ENCODE measurements at regions of chr11 and their contacts with region 1.

Region 1: DNA sequence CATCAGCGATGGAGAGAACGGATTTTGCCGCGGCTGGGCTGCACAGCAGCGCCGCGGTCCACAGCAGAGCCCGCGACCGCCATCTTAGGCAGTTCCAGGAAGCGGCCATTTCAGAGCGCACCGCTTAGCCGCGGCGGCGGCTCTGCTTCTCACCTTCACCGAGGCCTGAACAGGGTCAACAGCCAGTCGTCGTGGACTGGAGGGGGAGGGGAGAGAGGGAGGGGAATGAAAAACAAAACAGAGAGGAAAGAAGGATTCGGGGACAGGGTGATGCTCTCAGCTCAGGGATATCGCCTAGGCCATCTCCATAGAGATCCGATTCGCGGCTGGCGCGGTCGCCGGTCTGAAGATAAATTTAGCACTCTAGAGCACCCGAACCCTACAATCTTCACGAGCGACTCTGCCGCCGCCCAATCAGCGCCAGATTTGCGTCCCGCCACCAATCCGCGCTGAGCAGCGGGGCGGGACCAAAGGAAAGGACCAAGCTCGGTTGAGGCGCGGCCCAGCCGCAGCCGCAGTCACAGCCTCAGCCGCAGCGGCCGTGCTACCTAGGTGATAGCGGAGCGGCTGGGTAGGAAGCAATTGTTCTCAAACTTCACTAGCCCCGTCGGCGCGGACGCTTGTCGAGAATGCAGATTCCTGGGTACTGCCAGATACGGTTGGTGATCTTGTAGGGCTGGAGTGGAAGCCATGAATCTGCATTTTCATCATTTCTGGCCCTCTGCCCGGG is at the start of gene ZBED5:
- DNase-seq: peak; percentile 93
- ATAC-seq: peak; percentile 89
- H3K4me3 Mint-ChIP-seq: peak within 1 kb of the TSS; percentile 100
- H3K27ac Mint-ChIP-seq: peak within 1 kb of the TSS; percentile 100
- H3K4me1 Mint-ChIP-seq: peaks cover 48% of the 10 kb centered on the region
- H3K27me3 Mint-ChIP-seq: no peaks in the 10 kb centered on the region
- CTCF ChIP-seq: no peak
- total RNA-seq, gene ZBED5: 111 and 116 TPM in 2 replicates

Region 2: GRCh38 chr11:10293423-10294289 is 564.2 kb before region 1 on chr11 and contains the start of gene SBF2:
- CTCF ChIA-PET with region 1: no interaction called
- POLR2A ChIA-PET with region 1: no interaction called
- intact Hi-C with region 1: loop called (anchors 10 kb)
- DNase-seq: peak; percentile 78
- ATAC-seq: peak; percentile 66
- H3K4me3 Mint-ChIP-seq: peak within 1 kb of the TSS; percentile 81
- H3K27ac Mint-ChIP-seq: no peak within 1 kb of the TSS
- H3K4me1 Mint-ChIP-seq: peaks cover 27% of the 10 kb centered on the region
- H3K27me3 Mint-ChIP-seq: peaks cover 29% of the 10 kb centered on the region
- CTCF ChIP-seq: no peak
- total RNA-seq, gene SBF2: 7.9 and 12.0 TPM in 2 replicates

Region 3: GRCh38 chr11:10824888-10825287 is 33.0 kb before region 1 on chr11:
- CTCF ChIA-PET with region 1: no interaction called
- POLR2A ChIA-PET with region 1: interaction called, 45 read pairs
- intact Hi-C with region 1: loop called (anchors 1 kb)
- DNase-seq: no peak
- ATAC-seq: peak; percentile 99
- H3K4me3 Mint-ChIP-seq: peak overlapping the region; percentile 63
- H3K27ac Mint-ChIP-seq: peak overlapping the region; percentile 90
- H3K4me1 Mint-ChIP-seq: peaks cover 32% of the 10 kb centered on the region
- H3K27me3 Mint-ChIP-seq: no peaks in the 10 kb centered on the region
- CTCF ChIP-seq: no peak

Region 4: DNA sequence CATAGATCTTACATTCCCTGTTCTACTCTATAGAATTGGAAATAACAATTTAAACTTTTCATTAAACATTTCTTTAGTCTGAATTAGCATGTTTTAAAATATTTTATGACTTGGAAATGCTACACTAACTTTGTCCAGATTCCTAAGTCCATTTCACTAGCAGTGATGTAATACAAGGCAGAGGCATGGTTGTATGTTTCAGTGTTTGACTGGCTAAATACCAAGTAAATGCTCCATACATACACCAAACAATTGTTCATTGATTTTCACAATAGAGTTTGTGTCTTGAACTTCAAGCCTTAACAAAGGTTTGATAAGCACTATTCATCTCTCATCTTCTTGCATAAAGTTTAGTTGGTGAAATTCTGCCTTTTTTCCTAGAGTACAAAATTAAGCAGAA is 13.5 kb before region 1 on chr11:
- CTCF ChIA-PET with region 1: no interaction called
- POLR2A ChIA-PET with region 1: interaction called, 37 read pairs
- intact Hi-C with region 1: loop called (anchors 2 kb)
- DNase-seq: no peak
- ATAC-seq: no peak
- H3K4me3 Mint-ChIP-seq: no peak overlapping the region
- H3K27ac Mint-ChIP-seq: no peak overlapping the region
- H3K4me1 Mint-ChIP-seq: peaks cover 13% of the 10 kb centered on the region
- H3K27me3 Mint-ChIP-seq: no peaks in the 10 kb centered on the region
- CTCF ChIP-seq: no peak

Region 5: GRCh38 chr11:10899121-10899830 is 41.4 kb after region 1 on chr11:
- CTCF ChIA-PET with region 1: no interaction called
- POLR2A ChIA-PET with region 1: interaction called, 9 read pairs
- intact Hi-C with region 1: loop called (anchors 1 kb)
- DNase-seq: no peak
- ATAC-seq: peak; percentile 38
- H3K4me3 Mint-ChIP-seq: no peak overlapping the region
- H3K27ac Mint-ChIP-seq: peak overlapping the region; percentile 15
- H3K4me1 Mint-ChIP-seq: peaks cover 20% of the 10 kb centered on the region
- H3K27me3 Mint-ChIP-seq: peaks cover 2% of the 10 kb centered on the region
- CTCF ChIP-seq: no peak

Region 6: DNA sequence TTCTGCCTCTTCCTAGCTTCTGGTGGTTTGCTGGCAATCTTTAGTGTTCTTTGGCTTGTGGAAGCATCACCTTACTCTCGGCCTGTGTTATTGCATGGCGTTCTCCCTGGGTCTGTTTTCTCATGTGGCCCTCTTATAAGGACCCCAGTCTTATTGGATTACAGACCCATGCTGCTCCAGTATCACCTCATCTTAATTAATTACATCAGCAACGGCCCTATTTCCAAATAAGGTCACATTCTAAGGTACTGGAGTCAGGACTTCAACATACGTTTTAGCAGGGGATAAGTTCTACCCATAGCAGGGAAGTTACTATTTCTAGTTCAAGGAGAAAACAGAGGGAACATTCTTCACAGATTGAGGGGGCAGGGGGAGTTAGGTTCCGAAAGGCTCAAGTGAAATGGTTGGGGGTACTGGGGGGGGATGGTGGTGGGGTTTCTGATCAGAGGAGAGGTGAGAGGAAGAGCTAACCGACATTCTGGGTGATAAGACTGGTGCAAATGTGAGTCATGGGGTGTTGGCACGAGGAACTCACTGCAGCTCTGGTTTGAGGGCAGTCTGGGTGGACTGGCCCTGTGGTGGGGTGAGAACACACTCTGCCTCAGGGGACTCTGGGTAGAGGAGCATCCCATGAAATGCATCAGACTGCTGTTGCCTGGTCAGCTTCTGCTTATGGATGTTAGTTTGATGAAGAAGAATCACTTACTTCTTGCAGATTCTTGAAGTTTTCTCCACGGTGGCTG is 51.4 kb after region 1 on chr11:
- CTCF ChIA-PET with region 1: no interaction called
- POLR2A ChIA-PET with region 1: no interaction called
- intact Hi-C with region 1: no loop called
- DNase-seq: no peak
- ATAC-seq: no peak
- H3K4me3 Mint-ChIP-seq: no peak overlapping the region
- H3K27ac Mint-ChIP-seq: no peak overlapping the region
- H3K4me1 Mint-ChIP-seq: no peaks in the 10 kb centered on the region
- H3K27me3 Mint-ChIP-seq: peaks cover 2% of the 10 kb centered on the region
- CTCF ChIP-seq: no peak

Region 7: DNA sequence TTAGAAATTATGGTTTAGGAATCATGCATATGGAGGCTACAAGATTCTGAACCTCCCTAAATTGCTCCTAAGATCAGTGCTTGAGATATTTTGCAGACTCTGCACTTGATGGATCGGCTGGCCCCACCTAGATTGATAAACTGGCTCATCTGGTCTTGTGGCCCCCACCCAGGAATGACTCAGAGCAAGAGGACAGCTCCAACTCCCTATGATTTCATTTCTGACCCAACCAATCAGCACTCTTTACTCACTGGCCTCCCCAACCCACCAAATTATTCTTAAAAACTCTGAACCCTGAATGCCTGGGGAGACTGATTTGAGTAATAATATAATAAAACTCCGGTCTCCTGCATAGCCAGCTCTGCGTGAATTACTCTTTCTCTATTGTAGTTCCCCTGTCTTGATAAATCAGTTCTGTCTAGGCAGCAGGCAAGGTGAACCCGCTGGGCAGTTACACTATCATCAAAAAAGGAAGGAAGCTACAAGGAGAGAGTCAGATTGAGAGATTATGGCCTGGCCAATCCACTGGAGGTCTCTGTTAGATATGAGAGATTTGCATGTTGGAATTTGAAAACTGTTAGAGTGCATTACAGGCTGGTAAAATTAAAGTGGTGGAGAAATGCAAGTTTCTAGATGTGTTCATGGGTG is 249.3 kb after region 1 on chr11:
- CTCF ChIA-PET with region 1: no interaction called
- POLR2A ChIA-PET with region 1: no interaction called
- intact Hi-C with region 1: no loop called
- DNase-seq: no peak
- ATAC-seq: no peak
- H3K4me3 Mint-ChIP-seq: no peak overlapping the region
- H3K27ac Mint-ChIP-seq: no peak overlapping the region
- H3K4me1 Mint-ChIP-seq: no peaks in the 10 kb centered on the region
- H3K27me3 Mint-ChIP-seq: peaks cover 15% of the 10 kb centered on the region
- CTCF ChIP-seq: no peak

Measured in activated B cell treated with CpG ODN at 0.5 μM for 24 hours (primary cell).